ENCODE measurements at regions of chr14 and their contacts with region 1.

Region 1: GRCh38 chr14:105351920-105352851 is 37.6 kb downstream of the PACS2 start:
- DNase-seq: peak; percentile 74 to 86
- ATAC-seq: peak; percentile 100
- H3K4me3 ChIP-seq: no peak overlapping the region
- H3K27ac ChIP-seq: peak overlapping the region in 2 of 4 donors; percentile 12 to 48
- H3K4me1 ChIP-seq: peaks cover 6 to 9% of the 10 kb centered on the region in 2 donors
- H3K27me3 ChIP-seq: no peaks in the 10 kb centered on the region
- CTCF ChIP-seq: peak; percentile 83 to 91 (median 90)
- POLR2A ChIP-seq: no peak

Region 2: GRCh38 chr14:105086833-105087307 is 265.3 kb before region 1 on chr14:
- in situ Hi-C with region 1: loop called in 1 of 4 experiments (anchors 25 kb)
- intact Hi-C with region 1: loop called (anchors 1 kb)
- DNase-seq: no peak
- ATAC-seq: peak in 1 of 2 donors; percentile 33
- H3K4me3 ChIP-seq: peak overlapping the region; percentile 29 to 50 (median 45)
- H3K27ac ChIP-seq: peak overlapping the region in 1 of 4 donors; percentile 32
- H3K4me1 ChIP-seq: peaks cover 6 to 29% of the 10 kb centered on the region in 2 donors
- H3K27me3 ChIP-seq: peaks cover 2 to 19% (median 9%) of the 10 kb centered on the region in 3 donors
- CTCF ChIP-seq: peak in 4 of 5 experiments; percentile 55 to 70 (median 68)
- POLR2A ChIP-seq: no peak

Region 3: GRCh38 chr14:105093431-105094192 is 258.6 kb before region 1 on chr14:
- in situ Hi-C with region 1: loop called in 1 of 4 experiments (anchors 25 kb)
- intact Hi-C with region 1: loop called (anchors 1 kb)
- DNase-seq: no peak
- ATAC-seq: no peak
- H3K4me3 ChIP-seq: peak overlapping the region; percentile 49 to 66 (median 58)
- H3K27ac ChIP-seq: peak overlapping the region; percentile 24 to 64 (median 46)
- H3K4me1 ChIP-seq: peaks cover 3 to 33% of the 10 kb centered on the region in 2 donors
- H3K27me3 ChIP-seq: peaks cover 3 to 8% (median 7%) of the 10 kb centered on the region in 3 donors
- CTCF ChIP-seq: no peak
- POLR2A ChIP-seq: no peak

Region 4: GRCh38 chr14:105203057-105203531 is 149.1 kb before region 1 on chr14:
- in situ Hi-C with region 1: loop called in 1 of 4 experiments (anchors 25 kb)
- intact Hi-C with region 1: loop called (anchors 1 kb)
- DNase-seq: peak in 1 of 2 donors; percentile 65
- ATAC-seq: peak; percentile 39 to 62
- H3K4me3 ChIP-seq: no peak overlapping the region
- H3K27ac ChIP-seq: no peak overlapping the region
- H3K4me1 ChIP-seq: peaks cover 5 to 30% of the 10 kb centered on the region in 2 donors
- H3K27me3 ChIP-seq: peaks cover 0 to 12% (median 8%) of the 10 kb centered on the region in 3 donors
- CTCF ChIP-seq: peak; percentile 83 to 97 (median 95)
- POLR2A ChIP-seq: no peak

Region 5: GRCh38 chr14:105281371-105282097 is 70.7 kb before region 1 on chr14:
- in situ Hi-C with region 1: no loop called
- intact Hi-C with region 1: no loop called
- DNase-seq: no peak
- ATAC-seq: peak; percentile 58
- H3K4me3 ChIP-seq: no peak overlapping the region
- H3K27ac ChIP-seq: no peak overlapping the region
- H3K4me1 ChIP-seq: peaks cover 11 to 16% of the 10 kb centered on the region in 2 donors
- H3K27me3 ChIP-seq: no peaks in the 10 kb centered on the region
- CTCF ChIP-seq: peak in 4 of 5 experiments; percentile 31 to 62 (median 52)
- POLR2A ChIP-seq: no peak

Region 6: GRCh38 chr14:105300792-105301533 is 51.2 kb before region 1 on chr14 and contains the start of gene BRF1:
- in situ Hi-C with region 1: no loop called
- intact Hi-C with region 1: loop called (anchors 1 kb)
- DNase-seq: peak; percentile 96 to 97
- ATAC-seq: peak; percentile 91 to 94
- H3K4me3 ChIP-seq: peak within 1 kb of the TSS; percentile 69 to 97 (median 75)
- H3K27ac ChIP-seq: peak within 1 kb of the TSS; percentile 90 to 99 (median 94)
- H3K4me1 ChIP-seq: peaks cover 12 to 14% of the 10 kb centered on the region in 2 donors
- H3K27me3 ChIP-seq: no peaks in the 10 kb centered on the region
- CTCF ChIP-seq: no peak
- POLR2A ChIP-seq: peak; percentile 73 to 76
- total RNA-seq, gene BRF1: 19.5 to 27.4 (median 21.4) TPM

Measured in gastrocnemius medialis (tissue), 4 donors.